PC-9 (cell line): ENCODE measurements at regions of chr18 and their contacts with region 1.

Region 1: DNA sequence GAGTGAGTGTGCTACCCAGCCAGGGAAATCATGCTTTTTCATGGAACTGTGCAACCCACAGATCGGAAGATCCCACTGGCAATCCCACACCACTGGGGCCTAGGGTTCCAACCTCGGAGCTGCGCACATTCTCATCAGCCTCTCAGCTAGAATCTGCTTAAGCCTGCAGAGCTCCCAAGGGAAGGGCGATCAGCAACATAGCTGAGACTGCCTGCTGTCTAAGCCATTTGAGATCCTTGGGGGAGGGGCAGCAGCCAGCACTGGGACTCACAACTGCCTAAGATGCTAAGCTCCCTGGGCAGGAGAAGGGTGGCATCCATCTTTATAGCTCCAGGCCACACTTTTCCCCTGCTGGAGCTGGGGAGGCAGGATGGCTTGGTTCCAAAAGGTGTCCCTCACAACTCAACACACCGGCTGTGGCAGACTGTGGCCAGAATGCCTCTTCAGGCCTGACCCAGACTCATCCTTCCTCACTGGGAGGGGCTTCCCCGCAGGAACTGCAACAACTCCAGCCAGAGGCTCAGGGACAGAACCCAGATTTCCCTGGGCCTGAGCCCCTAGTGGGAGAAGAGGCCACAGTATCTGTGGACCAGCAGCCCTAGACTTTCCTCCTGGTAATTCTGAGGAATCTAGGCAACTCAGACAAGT is 1133.3 kb upstream of the PIK3C3 start:
- DNase-seq: no peak
- H3K4me3 ChIP-seq: no peak overlapping the region
- H3K27ac ChIP-seq: no peak overlapping the region
- H3K4me1 ChIP-seq: no peaks in the 10 kb centered on the region
- H3K27me3 ChIP-seq: no peaks in the 10 kb centered on the region
- CTCF ChIP-seq: no peak

Region 2: DNA sequence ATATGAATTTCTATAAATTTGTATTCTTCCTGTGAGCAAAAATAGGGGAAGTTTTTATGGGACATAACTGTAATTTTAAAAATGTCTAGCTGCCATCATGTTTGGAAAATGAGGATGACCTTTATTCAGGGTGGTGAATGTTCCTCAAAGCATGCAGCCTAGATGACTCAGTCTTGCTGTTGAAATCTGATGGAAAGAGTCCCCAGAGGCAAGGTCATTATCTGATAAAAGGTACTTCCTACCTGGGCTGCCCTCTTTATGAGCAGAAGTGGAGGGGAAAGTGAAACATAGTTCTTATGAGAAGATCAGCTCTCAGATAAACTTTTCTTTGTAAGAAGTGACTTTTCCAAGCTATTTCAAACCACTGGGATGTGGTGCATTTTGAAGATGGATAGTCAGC is 11.3 kb before region 1 on chr18:
- CTCF ChIA-PET with region 1: no interaction called
- POLR2A ChIA-PET with region 1: interaction called, 28 read pairs
- intact Hi-C with region 1: no loop called
- DNase-seq: peak; percentile 1 to 67
- H3K4me3 ChIP-seq: no peak overlapping the region
- H3K27ac ChIP-seq: peak overlapping the region; percentile 45
- H3K4me1 ChIP-seq: peaks cover 7% of the 10 kb centered on the region
- H3K27me3 ChIP-seq: no peaks in the 10 kb centered on the region
- CTCF ChIP-seq: no peak

Region 3: GRCh38 chr18:41484069-41484468 is 662.3 kb after region 1 on chr18:
- CTCF ChIA-PET with region 1: no interaction called
- POLR2A ChIA-PET with region 1: no interaction called
- intact Hi-C with region 1: no loop called
- DNase-seq: no peak
- H3K4me3 ChIP-seq: no peak overlapping the region
- H3K27ac ChIP-seq: no peak overlapping the region
- H3K4me1 ChIP-seq: no peaks in the 10 kb centered on the region
- H3K27me3 ChIP-seq: no peaks in the 10 kb centered on the region
- CTCF ChIP-seq: no peak